Heart left ventricle (tissue), 16 donors: ENCODE measurements at regions of chr14 and their contacts with region 1.

Region 1: DNA sequence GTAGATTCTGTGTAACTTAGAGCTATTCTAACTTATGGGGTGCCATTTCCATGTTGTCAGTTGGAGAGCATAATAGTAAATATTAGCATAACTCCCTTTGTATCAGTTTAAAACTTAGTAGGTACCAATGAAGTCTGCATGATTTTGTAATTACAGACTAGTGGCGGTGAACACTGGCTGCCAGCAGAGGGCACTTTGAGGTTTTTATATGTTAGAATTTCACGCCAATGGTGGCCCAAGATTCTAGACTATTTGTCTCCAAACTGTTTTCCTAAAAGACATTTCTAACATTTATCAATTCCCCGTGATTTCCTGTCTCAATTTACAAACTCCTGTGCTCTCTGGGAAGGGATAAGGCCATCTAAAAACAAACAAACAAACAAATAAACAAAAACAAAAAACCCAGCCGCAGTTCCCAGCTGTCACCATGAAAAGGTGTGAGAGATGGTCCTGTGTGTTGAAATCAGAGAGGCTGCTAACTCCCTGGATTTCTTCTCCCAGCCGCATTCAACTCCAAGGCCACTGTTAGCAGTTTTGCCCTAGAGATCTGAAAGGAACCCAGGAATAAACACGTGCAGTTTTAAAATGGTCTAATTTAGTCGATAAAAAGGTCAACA is 57.6 kb downstream of the BRMS1L start:
- DNase-seq: no peak
- ATAC-seq: no peak
- H3K4me3 ChIP-seq: no peak overlapping the region
- H3K27ac ChIP-seq: no peak overlapping the region
- H3K4me1 ChIP-seq: peaks cover 0 to 10% (median 5%) of the 10 kb centered on the region in 12 donors
- H3K27me3 ChIP-seq: no peaks in the 10 kb centered on the region
- CTCF ChIP-seq: peak; percentile 24 to 69 (median 48)
- POLR2A ChIP-seq: no peak

Region 2: GRCh38 chr14:35174342-35174741 is 709.4 kb before region 1 on chr14:
- intact Hi-C with region 1: no loop called
- DNase-seq: no peak
- ATAC-seq: no peak
- H3K4me3 ChIP-seq: no peak overlapping the region
- H3K27ac ChIP-seq: no peak overlapping the region
- H3K4me1 ChIP-seq: no peaks in the 10 kb centered on the region
- H3K27me3 ChIP-seq: no peaks in the 10 kb centered on the region
- CTCF ChIP-seq: no peak
- POLR2A ChIP-seq: no peak

Region 3: GRCh38 chr14:36048667-36049066 is 164.9 kb after region 1 on chr14:
- intact Hi-C with region 1: no loop called
- DNase-seq: peak in 2 of 5 donors; percentile 8 to 29
- ATAC-seq: no peak
- H3K4me3 ChIP-seq: no peak overlapping the region
- H3K27ac ChIP-seq: no peak overlapping the region
- H3K4me1 ChIP-seq: no peaks in the 10 kb centered on the region
- H3K27me3 ChIP-seq: peaks cover 0 to 6% (median 0%) of the 10 kb centered on the region in 9 donors
- CTCF ChIP-seq: no peak
- POLR2A ChIP-seq: no peak

Region 4: DNA sequence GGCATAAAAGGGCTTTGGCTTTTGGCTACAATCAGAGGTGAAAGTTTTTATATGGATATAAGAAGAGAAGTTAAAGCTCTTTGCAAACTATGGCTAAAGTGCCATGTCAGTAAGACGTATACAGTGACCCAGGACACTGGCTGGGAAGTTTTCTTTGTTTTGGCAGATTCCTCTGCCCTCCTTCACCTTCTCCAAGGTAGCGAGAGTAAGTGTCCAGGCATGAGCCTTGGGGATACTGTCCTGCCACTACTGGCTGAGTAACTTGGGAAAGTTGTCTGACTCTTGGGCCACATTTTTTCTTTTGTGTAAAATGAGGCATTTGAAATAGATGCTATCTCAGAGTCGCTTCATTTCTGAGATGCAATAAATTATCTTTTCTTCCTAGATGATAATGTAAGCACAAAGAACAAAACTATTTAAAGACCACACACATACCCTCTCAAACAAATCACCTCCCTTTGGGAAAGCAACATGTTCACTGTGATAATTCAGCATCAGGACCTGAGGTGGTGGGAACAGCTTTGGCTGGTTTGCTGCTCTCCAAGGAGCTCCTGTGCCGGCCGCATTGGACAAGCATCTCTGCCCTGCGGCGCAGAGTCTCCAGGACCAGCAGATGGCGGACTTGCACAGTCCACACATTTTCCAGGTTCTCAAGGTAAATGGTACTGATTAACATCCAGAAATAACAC is 186.4 kb after region 1 on chr14:
- intact Hi-C with region 1: loop called in 1 of 10 experiments (anchors 10 kb)
- DNase-seq: peak in 4 of 5 donors; percentile 18 to 63 (median 37)
- ATAC-seq: peak in 3 of 4 donors; percentile 60 to 66 (median 64)
- H3K4me3 ChIP-seq: no peak overlapping the region
- H3K27ac ChIP-seq: no peak overlapping the region
- H3K4me1 ChIP-seq: peaks cover 0 to 4% (median 0%) of the 10 kb centered on the region in 12 donors
- H3K27me3 ChIP-seq: peaks cover 0 to 36% (median 4%) of the 10 kb centered on the region in 9 donors
- CTCF ChIP-seq: peak in 11 of 12 donors; percentile 27 to 63 (median 43)
- POLR2A ChIP-seq: no peak

Region 5: DNA sequence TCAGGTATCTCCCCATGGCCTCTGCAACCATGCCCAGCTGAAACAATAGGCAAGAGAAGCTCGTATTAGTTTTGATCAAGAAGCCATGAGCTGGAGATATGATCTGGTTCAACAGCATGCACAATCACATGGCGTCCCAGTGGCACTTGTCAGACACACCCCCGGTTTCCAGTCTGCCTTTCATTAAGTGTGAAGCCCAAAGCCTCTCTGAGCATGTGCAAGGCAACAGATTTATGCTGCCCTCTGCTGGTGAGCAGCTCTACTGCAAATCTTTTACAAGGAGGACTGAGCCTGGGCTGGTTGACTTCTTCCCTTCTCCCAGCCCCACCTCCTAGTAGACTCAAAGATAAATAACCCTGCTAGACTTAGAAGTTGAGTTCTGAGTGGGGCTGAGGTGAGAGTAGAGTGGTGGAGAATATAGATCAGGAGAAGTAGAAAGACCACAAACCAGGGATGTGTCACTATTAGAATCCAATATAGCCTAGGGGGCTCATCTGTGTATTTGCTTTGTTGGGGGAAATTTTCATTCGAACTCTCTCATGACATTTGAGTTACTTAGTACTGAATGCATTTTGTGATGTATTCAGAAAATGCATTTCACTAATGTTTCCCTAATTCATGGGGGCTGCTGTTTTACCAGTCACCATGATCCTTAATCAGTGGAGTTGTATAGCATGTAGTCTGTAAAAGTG is 490.3 kb after region 1 on chr14:
- intact Hi-C with region 1: loop called in 4 of 10 experiments (anchors 10 kb)
- DNase-seq: peak; percentile 35 to 62 (median 44)
- ATAC-seq: peak in 3 of 4 donors; percentile 49 to 81 (median 76)
- H3K4me3 ChIP-seq: no peak overlapping the region
- H3K27ac ChIP-seq: no peak overlapping the region
- H3K4me1 ChIP-seq: no peaks in the 10 kb centered on the region
- H3K27me3 ChIP-seq: peaks cover 0 to 6% (median 0%) of the 10 kb centered on the region in 9 donors
- CTCF ChIP-seq: peak; percentile 50 to 79 (median 70)
- POLR2A ChIP-seq: no peak

Region 6: GRCh38 chr14:36604757-36605505 is 721.1 kb after region 1 on chr14:
- intact Hi-C with region 1: loop called in 1 of 10 experiments (anchors 10 kb)
- DNase-seq: peak in 2 of 5 donors; percentile 20 to 23
- ATAC-seq: peak in 1 of 4 donors; percentile 51
- H3K4me3 ChIP-seq: no peak overlapping the region
- H3K27ac ChIP-seq: no peak overlapping the region
- H3K4me1 ChIP-seq: no peaks in the 10 kb centered on the region
- H3K27me3 ChIP-seq: peaks cover 0 to 37% (median 7%) of the 10 kb centered on the region in 9 donors
- CTCF ChIP-seq: peak; percentile 67 to 86 (median 72)
- POLR2A ChIP-seq: no peak